PC-9 (cell line): ENCODE measurements at regions of chr1 and their contacts with region 1.

Region 1: DNA sequence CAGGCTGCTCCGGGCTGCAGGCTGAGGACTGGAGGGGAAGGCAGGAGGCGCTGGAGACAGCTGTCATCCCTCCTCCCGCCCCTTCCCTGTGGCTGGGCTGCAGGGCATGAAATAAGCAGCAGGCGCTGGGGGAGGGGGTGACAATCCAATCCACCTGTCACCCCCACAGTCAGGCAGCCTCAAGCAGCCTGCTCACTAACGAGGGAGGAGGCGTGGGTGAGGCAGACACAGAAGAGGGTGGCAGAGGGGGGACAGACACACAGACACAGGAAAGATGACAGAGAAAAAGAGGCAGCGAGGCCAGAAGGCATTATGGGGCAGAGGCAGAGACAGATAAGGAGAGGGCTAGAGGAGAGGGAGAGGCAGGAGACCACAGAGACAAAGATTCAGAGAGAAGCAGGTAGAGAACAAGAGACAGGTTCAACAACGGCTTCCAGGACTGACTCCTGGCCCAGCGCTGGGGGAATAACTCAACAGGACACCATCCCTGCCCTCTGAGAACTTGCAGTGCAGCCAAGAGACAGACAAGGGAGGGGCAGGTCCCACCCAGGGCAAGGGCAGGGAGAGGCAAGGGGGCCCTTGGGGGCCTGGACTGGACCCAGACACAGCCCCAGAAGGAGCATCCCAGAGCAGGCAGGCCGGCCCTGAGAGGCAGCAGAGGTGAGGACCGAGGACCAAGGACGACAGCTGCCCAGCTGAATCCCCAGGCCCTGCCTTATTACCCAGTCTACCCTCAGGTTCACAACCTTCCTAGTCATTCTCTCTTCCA is 11.2 kb downstream of the MEF2D start:
- DNase-seq: no peak
- H3K4me3 ChIP-seq: no peak overlapping the region
- H3K27ac ChIP-seq: peak overlapping the region; percentile 16
- H3K4me1 ChIP-seq: peaks cover 42% of the 10 kb centered on the region
- H3K27me3 ChIP-seq: no peaks in the 10 kb centered on the region
- CTCF ChIP-seq: no peak

Region 2: DNA sequence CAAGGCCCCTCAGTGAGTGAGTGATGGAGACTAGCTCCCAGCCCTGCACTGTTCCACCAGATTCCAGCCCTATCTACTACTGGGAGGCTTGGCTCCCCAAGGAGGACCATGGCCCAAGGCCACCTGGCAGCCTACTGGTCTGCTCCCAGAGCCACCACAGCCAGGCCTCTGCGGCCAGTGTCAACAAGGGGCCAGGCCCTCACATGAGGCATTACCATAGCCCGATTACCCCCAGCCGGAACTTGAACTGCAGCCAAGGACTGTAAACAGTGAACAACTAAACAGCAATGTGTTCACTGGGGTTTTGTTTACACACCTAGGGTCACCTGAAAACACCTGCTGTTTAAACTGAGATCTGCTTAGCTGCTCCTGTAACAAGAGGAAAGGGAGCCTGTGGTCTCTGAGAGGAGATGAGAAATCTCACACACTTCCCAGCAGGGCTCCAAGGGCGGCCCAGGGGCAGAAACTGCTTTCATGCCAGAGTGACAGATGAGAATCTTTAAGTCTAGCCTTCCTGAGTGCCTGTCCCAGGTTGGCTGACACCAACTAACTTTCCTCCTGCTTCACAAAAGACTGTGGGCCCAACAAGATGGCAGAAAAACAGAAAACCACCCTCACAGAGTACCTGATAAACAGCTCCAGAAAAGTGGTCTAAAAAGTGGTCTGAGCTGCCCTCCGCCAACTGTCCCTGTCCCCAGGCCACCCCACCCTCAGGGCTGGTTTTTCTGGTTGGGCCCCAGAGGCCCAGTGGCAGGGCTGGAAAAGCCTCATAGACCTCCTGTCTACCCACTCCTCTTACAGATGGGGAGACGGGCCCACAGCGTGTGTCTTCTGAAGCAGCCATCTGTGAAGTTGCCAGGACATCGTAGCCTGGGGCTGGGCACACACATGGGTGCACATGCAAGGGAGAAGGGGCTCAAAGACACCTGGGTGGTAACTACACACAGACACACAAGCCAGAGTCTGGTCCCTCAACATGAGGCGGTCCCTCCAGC is 17.6 kb before region 1 on chr1:
- CTCF ChIA-PET with region 1: no interaction called
- POLR2A ChIA-PET with region 1: no interaction called
- intact Hi-C with region 1: loop called (anchors 2 kb)
- DNase-seq: peak; percentile 90 to 100
- H3K4me3 ChIP-seq: peak overlapping the region; percentile 22; the same call in 1 of the 2 replicates
- H3K27ac ChIP-seq: peak overlapping the region; percentile 87
- H3K4me1 ChIP-seq: peaks cover 48% of the 10 kb centered on the region
- H3K27me3 ChIP-seq: no peaks in the 10 kb centered on the region
- CTCF ChIP-seq: no peak

Region 3: GRCh38 chr1:156524481-156524869 is 35.1 kb after region 1 on chr1:
- CTCF ChIA-PET with region 1: interaction called, 18 read pairs
- POLR2A ChIA-PET with region 1: no interaction called
- intact Hi-C with region 1: no loop called
- DNase-seq: no peak
- H3K4me3 ChIP-seq: no peak overlapping the region
- H3K27ac ChIP-seq: no peak overlapping the region
- H3K4me1 ChIP-seq: no peaks in the 10 kb centered on the region
- H3K27me3 ChIP-seq: no peaks in the 10 kb centered on the region
- CTCF ChIP-seq: no peak

Region 4: DNA sequence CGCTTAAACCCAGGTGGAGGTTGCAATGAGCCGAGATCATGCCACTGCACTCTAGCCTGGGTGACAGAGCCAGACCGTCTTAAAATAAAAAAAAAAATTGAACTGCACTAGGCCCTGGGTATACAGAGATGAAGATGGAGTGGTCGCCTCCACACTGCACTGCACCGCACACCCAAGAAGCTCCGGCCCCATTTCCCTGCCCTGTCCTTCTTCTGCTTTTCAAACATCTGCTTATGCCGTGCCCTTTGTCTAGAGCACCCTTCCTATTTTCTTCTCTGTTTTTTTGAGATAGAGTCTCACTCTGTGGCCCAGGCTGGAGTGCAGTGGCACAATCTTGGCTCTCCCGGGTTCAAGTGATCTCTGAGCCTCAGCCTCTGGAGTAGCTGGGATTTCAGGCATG is 65.6 kb after region 1 on chr1:
- CTCF ChIA-PET with region 1: no interaction called
- POLR2A ChIA-PET with region 1: interaction called, 24 read pairs
- intact Hi-C with region 1: no loop called
- DNase-seq: no peak
- H3K4me3 ChIP-seq: no peak overlapping the region
- H3K27ac ChIP-seq: no peak overlapping the region
- H3K4me1 ChIP-seq: peaks cover 35% of the 10 kb centered on the region
- H3K27me3 ChIP-seq: no peaks in the 10 kb centered on the region
- CTCF ChIP-seq: no peak